ENCODE measurements at regions of chr3 and their contacts with region 1.

Region 1: DNA sequence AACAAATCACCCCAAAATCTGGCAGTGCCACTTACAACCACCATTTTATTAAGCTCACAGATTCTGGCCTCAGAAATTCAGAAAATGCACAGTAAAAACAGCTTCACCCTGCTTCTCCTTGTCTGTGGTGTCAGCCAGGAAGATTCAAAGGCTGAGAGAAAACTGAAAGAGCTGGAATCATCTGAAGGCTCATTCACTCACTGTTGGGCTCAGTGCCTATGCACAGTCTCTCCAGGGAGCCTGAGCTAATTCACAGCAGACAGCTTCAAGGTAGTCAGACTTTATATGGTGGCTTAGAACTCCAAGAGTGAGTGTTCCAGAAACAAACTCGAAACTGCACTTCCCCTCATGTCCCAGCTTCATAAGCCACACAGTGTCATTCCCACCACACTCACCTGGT is 16.5 kb upstream of the PLOD2 start:
- DNase-seq: no peak
- ATAC-seq: no peak
- H3K4me3 ChIP-seq: no peak overlapping the region
- H3K27ac ChIP-seq: peak overlapping the region in 1 of 2 experiments; percentile 28; a peak in 1 of 6 replicates
- H3K4me1 ChIP-seq: peaks cover 5% of the 10 kb centered on the region; the same call in 2 of the 3 replicates
- CTCF ChIP-seq: no peak
- EP300 ChIP-seq: no peak
- POLR2A ChIP-seq: no peak
- RAD21 ChIP-seq: no peak

Region 2: DNA sequence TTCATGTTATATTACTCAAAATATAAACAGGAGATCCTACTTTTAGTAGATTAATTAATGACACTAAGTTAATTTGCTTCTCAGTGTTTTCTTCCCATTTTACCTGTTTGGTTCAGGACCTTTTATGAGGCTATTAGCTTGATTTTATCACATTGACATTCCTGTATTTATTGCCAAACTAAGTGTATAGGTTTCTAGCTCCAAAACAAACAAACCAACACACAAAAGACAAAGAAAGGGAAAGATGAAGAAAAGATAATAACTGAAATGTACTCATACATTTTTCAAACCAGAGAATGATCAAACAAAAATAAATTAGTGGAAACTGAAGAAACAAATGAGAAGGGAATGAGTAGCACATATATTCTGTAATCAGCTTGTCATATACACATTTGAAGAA is 177.1 kb before region 1 on chr3:
- CTCF ChIA-PET with region 1: no interaction called
- POLR2A ChIA-PET with region 1: no interaction called
- DNase-seq: no peak
- ATAC-seq: no peak
- H3K4me3 ChIP-seq: no peak overlapping the region
- H3K27ac ChIP-seq: no peak overlapping the region
- H3K4me1 ChIP-seq: no peaks in the 10 kb centered on the region
- CTCF ChIP-seq: no peak
- EP300 ChIP-seq: no peak
- POLR2A ChIP-seq: no peak
- RAD21 ChIP-seq: no peak

Region 3: DNA sequence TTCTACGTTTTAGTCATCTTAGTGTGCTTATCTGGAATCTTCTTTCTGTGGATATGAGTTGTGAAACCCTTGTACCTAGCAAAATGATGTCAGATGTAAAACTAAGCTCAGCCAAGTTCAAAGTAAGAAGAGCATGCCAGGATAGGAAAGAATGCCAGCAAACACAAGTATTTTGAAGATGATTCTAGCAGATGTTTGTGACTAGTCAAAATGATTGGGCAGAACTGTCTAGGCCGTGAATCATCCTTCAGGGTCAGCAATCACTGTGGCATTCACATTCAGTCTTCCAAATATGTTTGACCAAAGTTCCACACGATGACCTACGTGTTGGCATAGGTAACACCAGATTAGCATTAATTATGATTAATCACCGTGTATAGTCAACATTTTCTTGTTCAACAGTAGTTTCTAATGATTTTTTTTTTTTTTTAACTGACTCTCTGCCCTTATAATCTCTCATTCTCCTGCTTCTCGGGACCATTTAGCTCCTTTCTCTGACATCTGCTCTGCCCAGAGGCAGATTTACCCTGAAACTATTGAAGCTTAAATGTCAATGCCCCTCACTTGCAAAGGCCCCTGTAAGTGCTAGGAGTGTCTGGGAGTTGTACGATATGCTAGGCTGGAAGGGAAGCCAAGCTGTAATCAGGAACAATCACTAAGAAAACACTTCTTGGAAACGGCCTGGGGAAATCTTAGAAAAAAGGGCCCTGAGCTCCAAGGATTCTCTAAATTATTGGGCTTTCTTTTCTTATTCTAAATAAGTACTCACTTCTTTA is 10.9 kb before region 1 on chr3:
- CTCF ChIA-PET with region 1: interaction called, 12 read pairs
- POLR2A ChIA-PET with region 1: interaction called, 5 read pairs
- DNase-seq: peak in 1 of 2 experiments; percentile 88
- ATAC-seq: peak; percentile 65
- H3K4me3 ChIP-seq: 0 out of 3 replicates have a peak overlapping the region, but pooled peaks have one; percentile 10
- H3K27ac ChIP-seq: peak overlapping the region; percentile 87 to 97
- H3K4me1 ChIP-seq: peaks cover 61% of the 10 kb centered on the region
- CTCF ChIP-seq: no peak
- EP300 ChIP-seq: peak; percentile 81 to 92; a peak in 3 of 5 replicates
- POLR2A ChIP-seq: no peak
- RAD21 ChIP-seq: peak; percentile 2 to 21; a peak in 1 of 5 replicates

Measured in A549 (cell line).